ENCODE measurements at regions of chr13 and their contacts with region 1.

Region 1: GRCh38 chr13:39415008-39415802 is 187.8 kb downstream of the LHFPL6 start:
- DNase-seq: peak; percentile 20
- H3K4me3 ChIP-seq: no peak overlapping the region
- H3K27ac ChIP-seq: no peak overlapping the region
- H3K4me1 ChIP-seq: no peaks in the 10 kb centered on the region
- H3K27me3 ChIP-seq: no peaks in the 10 kb centered on the region
- CTCF ChIP-seq: no peak

Region 2: DNA sequence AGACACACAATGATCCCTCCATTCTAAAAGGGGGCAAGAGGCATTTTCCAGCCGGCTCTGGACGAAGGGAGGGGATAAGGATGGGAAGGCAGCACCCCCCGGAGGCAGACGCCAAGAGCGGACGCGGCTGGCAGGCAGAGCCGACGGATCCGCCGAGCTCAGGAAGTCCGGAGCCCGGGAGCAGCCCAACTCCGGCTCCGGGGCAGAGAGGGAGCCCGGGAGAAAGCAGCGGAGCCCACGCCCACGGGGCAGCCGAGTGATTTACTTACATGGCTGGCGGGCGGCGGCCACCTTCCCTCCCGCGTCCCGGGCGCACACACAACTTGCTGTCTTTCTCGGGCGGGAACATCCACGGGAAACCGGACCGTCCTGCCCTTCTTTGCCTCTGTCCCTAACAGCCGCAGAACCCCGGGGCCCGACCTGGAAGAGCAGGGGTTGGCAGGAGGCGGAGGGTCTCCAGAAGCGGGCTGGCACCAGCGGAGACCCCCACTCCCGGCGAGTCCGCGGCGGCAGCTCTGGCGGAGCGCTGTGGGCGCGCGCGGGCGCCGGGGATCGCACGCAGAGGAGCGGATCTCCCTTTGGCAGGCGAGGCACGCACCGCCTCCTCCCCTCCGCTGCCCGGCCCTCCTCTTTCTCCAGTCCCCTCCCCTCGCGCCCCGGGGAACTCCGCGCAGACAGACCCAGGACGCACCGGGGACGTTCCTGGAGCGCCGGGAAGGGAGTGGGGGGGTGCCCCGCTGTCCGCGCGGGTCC is 187.6 kb after region 1 on chr13 and contains the start of gene LHFPL6:
- intact Hi-C with region 1: loop called (anchors 10 kb)
- DNase-seq: peak; percentile 73
- H3K4me3 ChIP-seq: peak within 1 kb of the TSS; percentile 66
- H3K27ac ChIP-seq: peak within 1 kb of the TSS; percentile 67
- H3K4me1 ChIP-seq: no peaks in the 10 kb centered on the region
- H3K27me3 ChIP-seq: peaks cover 12% of the 10 kb centered on the region
- CTCF ChIP-seq: no peak
- total RNA-seq, gene LHFPL6: 4.3 to 10.1 TPM